ENCODE measurements at regions of chr16 and their contacts with region 1.

Region 1: GRCh38 chr16:68923116-68923515 is 79.8 kb downstream of the TANGO6 start:
- DNase-seq: no peak
- ATAC-seq: no peak
- H3K4me3 ChIP-seq: no peak overlapping the region
- H3K27ac ChIP-seq: no peak overlapping the region
- H3K4me1 ChIP-seq: no peaks in the 10 kb centered on the region
- H3K27me3 ChIP-seq: no peaks in the 10 kb centered on the region
- CTCF ChIP-seq: no peak

Region 2: DNA sequence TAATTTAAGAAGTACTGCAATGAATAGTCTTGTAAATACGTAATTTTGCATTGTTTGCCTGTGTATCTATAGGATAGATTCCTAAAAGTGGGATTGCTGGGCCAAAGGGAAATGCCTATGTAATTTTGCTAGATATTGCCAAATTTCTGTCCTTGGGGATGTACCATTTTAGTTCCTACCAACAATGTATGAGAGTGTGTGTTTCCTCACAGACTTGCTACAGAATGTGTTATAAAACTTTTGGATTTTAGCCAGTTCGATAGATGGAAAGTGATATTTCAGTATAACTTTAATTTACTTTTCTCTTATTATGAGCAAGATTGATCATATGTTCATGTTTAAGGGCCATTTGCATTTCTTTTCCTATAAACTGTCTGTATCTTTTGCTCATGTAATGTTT is 71.5 kb before region 1 on chr16:
- CTCF ChIA-PET with region 1: no interaction called
- POLR2A ChIA-PET with region 1: no interaction called
- in situ Hi-C with region 1: no loop called
- intact Hi-C with region 1: no loop called
- DNase-seq: no peak
- ATAC-seq: no peak
- H3K4me3 ChIP-seq: no peak overlapping the region
- H3K27ac ChIP-seq: no peak overlapping the region
- H3K4me1 ChIP-seq: no peaks in the 10 kb centered on the region
- H3K27me3 ChIP-seq: no peaks in the 10 kb centered on the region
- CTCF ChIP-seq: no peak

Region 3: DNA sequence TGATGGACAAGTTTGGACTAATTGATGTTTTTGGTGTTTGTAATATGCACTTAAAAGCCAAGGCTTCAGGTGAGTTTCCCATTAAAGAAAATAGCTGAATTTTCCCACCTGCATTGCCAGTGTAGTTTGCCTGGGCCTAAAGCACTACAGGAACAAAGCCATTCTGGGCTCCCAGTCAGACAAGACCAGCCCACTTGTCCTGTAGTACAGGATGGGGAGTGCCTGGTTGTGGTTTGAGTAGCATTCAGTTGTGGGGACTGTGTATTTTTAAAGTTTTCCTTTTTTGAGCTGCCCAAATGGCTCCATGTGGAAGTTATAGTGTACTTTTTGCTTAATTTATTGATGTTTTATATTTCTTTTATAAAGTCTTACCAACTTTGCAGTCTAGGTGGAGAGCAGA is 11.9 kb after region 1 on chr16:
- CTCF ChIA-PET with region 1: no interaction called
- POLR2A ChIA-PET with region 1: interaction called, 15 read pairs
- in situ Hi-C with region 1: no loop called
- intact Hi-C with region 1: no loop called
- DNase-seq: no peak
- ATAC-seq: no peak
- H3K4me3 ChIP-seq: no peak overlapping the region
- H3K27ac ChIP-seq: no peak overlapping the region
- H3K4me1 ChIP-seq: no peaks in the 10 kb centered on the region
- H3K27me3 ChIP-seq: no peaks in the 10 kb centered on the region
- CTCF ChIP-seq: no peak

Measured in Panc1 (cell line).